OCI-LY7 (cell line): ENCODE measurements at regions of chr17 and their contacts with region 1.

Region 1: GRCh38 chr17:45640141-45640850 is 143.8 kb upstream of the CRHR1 start:
- DNase-seq: peak; percentile 75
- H3K4me3 ChIP-seq: no peak overlapping the region
- H3K27ac ChIP-seq: no peak overlapping the region
- H3K4me1 ChIP-seq: no peaks in the 10 kb centered on the region
- CTCF ChIP-seq: peak; percentile 99

Region 2: GRCh38 chr17:45734598-45734997 is 94.3 kb after region 1 on chr17:
- CTCF ChIA-PET with region 1: no interaction called
- POLR2A ChIA-PET with region 1: no interaction called
- intact Hi-C with region 1: no loop called
- DNase-seq: no peak
- H3K4me3 ChIP-seq: no peak overlapping the region
- H3K27ac ChIP-seq: no peak overlapping the region
- H3K4me1 ChIP-seq: no peaks in the 10 kb centered on the region
- CTCF ChIP-seq: no peak

Region 3: DNA sequence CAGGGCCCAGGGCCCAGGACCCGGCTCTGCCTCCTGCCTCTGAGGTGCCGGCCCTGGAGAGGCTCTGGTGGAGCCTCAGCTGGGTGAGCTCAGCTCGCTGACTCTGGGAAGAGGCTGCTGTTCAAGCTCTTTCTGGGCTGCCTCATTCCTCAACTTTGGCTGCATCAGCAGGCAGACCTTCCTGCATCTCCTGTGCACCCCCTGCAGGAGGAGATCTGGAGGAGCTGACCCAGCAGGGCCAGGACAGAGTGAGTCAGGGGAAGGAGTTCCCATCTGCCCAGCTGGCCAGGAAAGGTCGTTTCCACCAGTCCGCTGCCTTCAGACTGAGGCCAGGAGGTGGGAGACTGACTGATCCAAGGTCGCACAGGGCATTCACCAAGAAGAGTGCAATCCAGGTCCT is 154.5 kb after region 1 on chr17:
- CTCF ChIA-PET with region 1: no interaction called
- POLR2A ChIA-PET with region 1: no interaction called
- intact Hi-C with region 1: loop called (anchors 10 kb)
- DNase-seq: no peak
- H3K4me3 ChIP-seq: no peak overlapping the region
- H3K27ac ChIP-seq: no peak overlapping the region
- H3K4me1 ChIP-seq: no peaks in the 10 kb centered on the region
- CTCF ChIP-seq: no peak

Region 4: DNA sequence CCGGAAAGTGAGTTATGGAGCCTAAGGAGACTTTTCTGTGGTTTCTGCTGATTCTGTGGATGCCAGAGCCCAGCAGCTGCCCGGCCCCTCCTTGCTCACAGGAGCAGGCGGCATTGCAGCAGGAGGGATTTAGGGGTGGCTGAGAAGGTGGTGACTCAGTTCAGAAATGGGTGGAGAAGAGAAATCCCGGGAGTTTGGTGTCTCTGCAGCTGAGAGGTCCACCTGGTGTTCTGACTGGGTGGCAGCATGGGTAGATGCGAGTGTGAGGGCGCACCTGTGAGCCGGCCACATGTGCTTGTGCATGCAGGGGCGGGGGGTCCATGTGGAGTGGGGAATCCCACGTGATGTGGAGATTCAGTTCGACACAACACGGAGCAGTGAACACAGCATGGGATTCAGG is 188.3 kb after region 1 on chr17:
- CTCF ChIA-PET with region 1: interaction called, 4 read pairs
- POLR2A ChIA-PET with region 1: no interaction called
- intact Hi-C with region 1: loop called (anchors 1 kb)
- DNase-seq: no peak
- H3K4me3 ChIP-seq: no peak overlapping the region
- H3K27ac ChIP-seq: no peak overlapping the region
- H3K4me1 ChIP-seq: no peaks in the 10 kb centered on the region
- CTCF ChIP-seq: no peak